MCF 10A (cell line): ENCODE measurements at regions of chr5 and their contacts with region 1.

Region 1: GRCh38 chr5:124056991-124057723 is 545.2 kb downstream of the CSNK1G3 start:
- DNase-seq: peak; percentile 59
- H3K4me3 Mint-ChIP-seq: peak overlapping the region; percentile 35
- H3K27ac Mint-ChIP-seq: no peak overlapping the region
- H3K4me1 Mint-ChIP-seq: peaks cover 25% of the 10 kb centered on the region
- H3K27me3 Mint-ChIP-seq: no peaks in the 10 kb centered on the region
- CTCF ChIP-seq: no peak

Region 2: GRCh38 chr5:123951186-123951977 is 105.8 kb before region 1 on chr5:
- CTCF ChIA-PET with region 1: no interaction called
- POLR2A ChIA-PET with region 1: no interaction called
- intact Hi-C with region 1: loop called (anchors 5 kb)
- DNase-seq: peak; percentile 96
- H3K4me3 Mint-ChIP-seq: peak overlapping the region; percentile 0
- H3K27ac Mint-ChIP-seq: peak overlapping the region; percentile 33
- H3K4me1 Mint-ChIP-seq: peaks cover 29% of the 10 kb centered on the region
- H3K27me3 Mint-ChIP-seq: no peaks in the 10 kb centered on the region
- CTCF ChIP-seq: no peak

Region 3: GRCh38 chr5:124102486-124102885 is 45.3 kb after region 1 on chr5:
- CTCF ChIA-PET with region 1: no interaction called
- POLR2A ChIA-PET with region 1: interaction called, 5 read pairs
- intact Hi-C with region 1: loop called (anchors 5 kb)
- DNase-seq: peak; percentile 61
- H3K4me3 Mint-ChIP-seq: no peak overlapping the region
- H3K27ac Mint-ChIP-seq: no peak overlapping the region
- H3K4me1 Mint-ChIP-seq: peaks cover 26% of the 10 kb centered on the region
- H3K27me3 Mint-ChIP-seq: no peaks in the 10 kb centered on the region
- CTCF ChIP-seq: no peak